Heart left ventricle (tissue), 16 donors: ENCODE measurements at regions of chr11 and their contacts with region 1.

Region 1: GRCh38 chr11:67613960-67614715 is 7.4 kb downstream of the NDUFV1 start:
- DNase-seq: peak in 4 of 5 donors; percentile 59 to 78 (median 66)
- ATAC-seq: peak; percentile 18 to 52 (median 44)
- H3K4me3 ChIP-seq: peak overlapping the region in 11 of 12 donors; percentile 20 to 57 (median 45)
- H3K27ac ChIP-seq: peak overlapping the region in 10 of 12 donors; percentile 19 to 88 (median 55)
- H3K4me1 ChIP-seq: peaks cover 0 to 38% (median 12%) of the 10 kb centered on the region in 12 donors
- H3K27me3 ChIP-seq: peaks cover 0 to 15% (median 0%) of the 10 kb centered on the region in 9 donors
- CTCF ChIP-seq: peak; percentile 59 to 78 (median 70)
- POLR2A ChIP-seq: no peak

Region 2: GRCh38 chr11:67665541-67666362 is 51.6 kb after region 1 on chr11:
- intact Hi-C with region 1: loop called in 1 of 10 experiments (anchors 5 kb)
- DNase-seq: peak in 1 of 5 donors; percentile 45
- ATAC-seq: peak; percentile 21 to 55 (median 40)
- H3K4me3 ChIP-seq: no peak overlapping the region
- H3K27ac ChIP-seq: no peak overlapping the region
- H3K4me1 ChIP-seq: no peaks in the 10 kb centered on the region
- H3K27me3 ChIP-seq: no peaks in the 10 kb centered on the region
- CTCF ChIP-seq: peak in 8 of 12 donors; percentile 9 to 37 (median 19)
- POLR2A ChIP-seq: no peak

Region 3: DNA sequence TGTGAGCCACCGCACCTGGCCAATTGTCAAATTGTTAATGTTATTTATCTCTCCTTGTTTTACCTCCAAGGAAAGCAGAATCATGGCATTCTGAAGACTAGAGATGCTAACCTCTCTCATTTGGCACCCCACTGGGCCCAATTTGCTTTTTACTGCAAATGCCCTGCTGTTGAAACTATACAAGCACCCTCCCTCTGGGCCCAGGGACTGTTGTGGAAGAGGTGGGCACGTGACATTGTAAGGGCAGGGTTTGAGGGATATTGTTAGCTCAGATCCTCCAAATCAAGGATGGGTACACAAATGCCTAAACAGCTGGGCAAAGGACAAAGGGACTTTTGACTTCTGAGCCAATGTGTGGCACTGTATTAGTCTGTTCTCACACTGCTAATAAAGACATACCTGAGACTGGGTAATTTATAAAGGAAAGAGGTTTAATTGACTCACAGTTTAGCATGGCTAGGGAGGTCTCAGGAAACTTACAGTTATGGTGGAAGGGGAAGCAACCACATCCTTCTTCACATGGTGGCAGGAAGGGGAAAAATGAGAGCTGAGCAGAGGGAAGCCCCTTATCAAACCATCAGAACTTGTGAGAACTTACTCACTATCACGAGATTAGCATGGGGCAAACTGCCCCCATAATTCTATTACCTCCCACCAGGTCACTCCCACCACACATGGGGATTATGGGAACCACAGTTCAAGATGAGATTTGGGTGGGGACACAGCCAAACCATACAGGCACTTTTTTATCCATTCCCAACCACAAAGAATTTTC is 66.7 kb after region 1 on chr11:
- intact Hi-C with region 1: no loop called
- DNase-seq: no peak
- ATAC-seq: no peak
- H3K4me3 ChIP-seq: no peak overlapping the region
- H3K27ac ChIP-seq: peak overlapping the region in 1 of 12 donors; percentile 19
- H3K4me1 ChIP-seq: peaks cover 0 to 3% (median 0%) of the 10 kb centered on the region in 12 donors
- H3K27me3 ChIP-seq: peaks cover 0 to 11% (median 0%) of the 10 kb centered on the region in 9 donors
- CTCF ChIP-seq: no peak
- POLR2A ChIP-seq: no peak

Region 4: GRCh38 chr11:67745176-67745726 is 131.1 kb after region 1 on chr11:
- intact Hi-C with region 1: no loop called
- DNase-seq: no peak
- ATAC-seq: no peak
- H3K4me3 ChIP-seq: no peak overlapping the region
- H3K27ac ChIP-seq: no peak overlapping the region
- H3K4me1 ChIP-seq: no peaks in the 10 kb centered on the region
- H3K27me3 ChIP-seq: no peaks in the 10 kb centered on the region
- CTCF ChIP-seq: no peak
- POLR2A ChIP-seq: no peak